CD4-positive, alpha-beta T cell (primary cell): ENCODE measurements at regions of chr5 and their contacts with region 1.

Region 1: GRCh38 chr5:39547553-39548154 is 122.9 kb upstream of the DAB2 start:
- DNase-seq: peak in 4 of 14 experiments; percentile 21 to 65 (median 58)
- ATAC-seq: no peak
- H3K4me3 ChIP-seq: no peak overlapping the region
- H3K4me3 Mint-ChIP-seq: no peak overlapping the region
- H3K27ac ChIP-seq: no peak overlapping the region
- H3K27ac Mint-ChIP-seq: no peak overlapping the region
- H3K4me1 ChIP-seq: no peaks in the 10 kb centered on the region
- H3K4me1 Mint-ChIP-seq: peaks cover 7% of the 10 kb centered on the region
- H3K27me3 ChIP-seq: peaks cover 0 to 6% of the 10 kb centered on the region in 2 experiments
- H3K27me3 Mint-ChIP-seq: peaks cover 8% of the 10 kb centered on the region
- CTCF ChIP-seq: peak; percentile 84

Region 2: DNA sequence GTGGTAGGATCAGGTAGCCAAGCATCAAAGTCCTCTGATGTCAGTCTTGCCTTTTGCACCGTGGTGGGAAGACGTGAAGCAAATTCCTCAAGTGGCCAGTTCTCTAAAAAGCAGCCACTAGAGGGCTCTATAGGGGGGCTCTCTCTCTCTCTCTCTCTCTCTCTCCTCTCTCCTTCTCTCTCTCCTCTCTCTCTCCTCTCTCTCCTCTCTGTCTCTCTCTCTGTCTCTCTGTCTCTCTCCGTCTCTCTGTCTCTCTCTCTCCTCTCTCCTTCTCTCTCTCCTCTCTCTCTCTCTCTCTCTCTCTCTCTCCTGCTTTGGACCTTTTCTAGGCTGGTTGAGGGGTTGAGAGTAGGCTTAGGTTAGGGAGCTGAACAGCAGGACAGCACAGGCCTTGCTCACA is 715.7 kb before region 1 on chr5:
- CTCF ChIA-PET with region 1: no interaction called
- POLR2A ChIA-PET with region 1: no interaction called
- intact Hi-C with region 1: loop called in 1 of 2 experiments (anchors 2 kb)
- DNase-seq: peak in 1 of 14 experiments; percentile 8
- ATAC-seq: no peak
- H3K4me3 ChIP-seq: no peak overlapping the region
- H3K4me3 Mint-ChIP-seq: no peak overlapping the region
- H3K27ac ChIP-seq: no peak overlapping the region
- H3K27ac Mint-ChIP-seq: no peak overlapping the region
- H3K4me1 ChIP-seq: no peaks in the 10 kb centered on the region
- H3K4me1 Mint-ChIP-seq: no peaks in the 10 kb centered on the region
- H3K27me3 ChIP-seq: peaks cover 3 to 15% of the 10 kb centered on the region in 2 experiments
- H3K27me3 Mint-ChIP-seq: peaks cover 48% of the 10 kb centered on the region
- CTCF ChIP-seq: no peak

Region 3: DNA sequence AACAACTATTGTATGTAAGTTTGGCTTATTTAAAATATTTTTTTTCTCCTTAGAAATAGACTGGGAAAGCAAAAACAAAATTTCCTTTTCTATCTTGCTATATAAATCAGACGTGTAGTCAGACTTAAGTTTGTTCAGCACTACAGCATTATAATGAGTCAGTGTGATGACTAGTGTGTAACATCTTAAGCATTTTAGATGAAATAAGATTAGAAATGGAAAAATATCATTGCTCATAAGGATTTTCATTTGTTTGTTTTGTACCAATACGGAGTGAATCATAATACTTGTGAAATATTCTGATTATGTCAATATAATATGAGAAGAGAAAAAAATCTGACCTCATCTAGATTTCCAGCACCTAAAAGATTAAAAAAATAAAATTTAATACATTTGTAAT is 408.8 kb before region 1 on chr5:
- CTCF ChIA-PET with region 1: no interaction called
- POLR2A ChIA-PET with region 1: no interaction called
- intact Hi-C with region 1: loop called in 1 of 2 experiments (anchors 5 kb)
- DNase-seq: no peak
- ATAC-seq: no peak
- H3K4me3 ChIP-seq: no peak overlapping the region
- H3K4me3 Mint-ChIP-seq: no peak overlapping the region
- H3K27ac ChIP-seq: no peak overlapping the region
- H3K27ac Mint-ChIP-seq: peak overlapping the region; percentile 73
- H3K4me1 ChIP-seq: no peaks in the 10 kb centered on the region
- H3K4me1 Mint-ChIP-seq: peaks cover 36% of the 10 kb centered on the region
- H3K27me3 ChIP-seq: no peaks in the 10 kb centered on the region
- H3K27me3 Mint-ChIP-seq: no peaks in the 10 kb centered on the region
- CTCF ChIP-seq: no peak

Region 4: DNA sequence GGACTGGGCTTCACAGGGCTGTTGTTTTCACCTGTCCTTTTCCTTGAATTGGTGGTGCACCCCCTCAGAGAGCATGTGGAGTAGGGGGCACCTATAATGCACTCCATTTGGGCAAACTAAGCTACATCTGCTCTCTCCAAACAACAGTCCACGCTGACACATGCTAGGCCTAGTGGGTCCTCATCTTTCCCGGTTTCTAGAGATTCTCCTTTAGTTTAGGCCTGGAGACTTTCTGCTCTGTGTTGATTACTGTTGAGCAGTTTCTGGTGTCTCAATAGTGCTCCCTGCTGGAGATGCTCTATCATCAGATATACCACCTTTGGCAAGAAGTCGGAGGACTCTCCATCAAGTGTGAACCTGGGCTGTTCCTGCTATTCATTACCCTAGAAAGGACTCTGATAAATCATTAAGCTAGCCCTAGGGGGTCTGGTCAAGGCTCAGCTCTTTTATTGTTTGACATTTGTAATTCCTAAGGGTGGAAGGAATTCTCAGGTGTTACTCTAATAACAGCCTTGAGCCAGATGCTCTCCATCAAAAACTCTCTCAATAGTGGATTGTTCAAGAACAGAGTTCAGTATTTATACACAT is 264.3 kb before region 1 on chr5:
- CTCF ChIA-PET with region 1: no interaction called
- POLR2A ChIA-PET with region 1: no interaction called
- intact Hi-C with region 1: loop called in 1 of 2 experiments (anchors 5 kb)
- DNase-seq: peak; percentile 5 to 90 (median 50)
- ATAC-seq: peak; percentile 100
- H3K4me3 ChIP-seq: no peak overlapping the region
- H3K4me3 Mint-ChIP-seq: peak overlapping the region; percentile 17
- H3K27ac ChIP-seq: no peak overlapping the region
- H3K27ac Mint-ChIP-seq: peak overlapping the region; percentile 67
- H3K4me1 ChIP-seq: peaks cover 9% of the 10 kb centered on the region
- H3K4me1 Mint-ChIP-seq: peaks cover 41% of the 10 kb centered on the region
- H3K27me3 ChIP-seq: no peaks in the 10 kb centered on the region
- H3K27me3 Mint-ChIP-seq: peaks cover 9% of the 10 kb centered on the region
- CTCF ChIP-seq: peak; percentile 81

Region 5: DNA sequence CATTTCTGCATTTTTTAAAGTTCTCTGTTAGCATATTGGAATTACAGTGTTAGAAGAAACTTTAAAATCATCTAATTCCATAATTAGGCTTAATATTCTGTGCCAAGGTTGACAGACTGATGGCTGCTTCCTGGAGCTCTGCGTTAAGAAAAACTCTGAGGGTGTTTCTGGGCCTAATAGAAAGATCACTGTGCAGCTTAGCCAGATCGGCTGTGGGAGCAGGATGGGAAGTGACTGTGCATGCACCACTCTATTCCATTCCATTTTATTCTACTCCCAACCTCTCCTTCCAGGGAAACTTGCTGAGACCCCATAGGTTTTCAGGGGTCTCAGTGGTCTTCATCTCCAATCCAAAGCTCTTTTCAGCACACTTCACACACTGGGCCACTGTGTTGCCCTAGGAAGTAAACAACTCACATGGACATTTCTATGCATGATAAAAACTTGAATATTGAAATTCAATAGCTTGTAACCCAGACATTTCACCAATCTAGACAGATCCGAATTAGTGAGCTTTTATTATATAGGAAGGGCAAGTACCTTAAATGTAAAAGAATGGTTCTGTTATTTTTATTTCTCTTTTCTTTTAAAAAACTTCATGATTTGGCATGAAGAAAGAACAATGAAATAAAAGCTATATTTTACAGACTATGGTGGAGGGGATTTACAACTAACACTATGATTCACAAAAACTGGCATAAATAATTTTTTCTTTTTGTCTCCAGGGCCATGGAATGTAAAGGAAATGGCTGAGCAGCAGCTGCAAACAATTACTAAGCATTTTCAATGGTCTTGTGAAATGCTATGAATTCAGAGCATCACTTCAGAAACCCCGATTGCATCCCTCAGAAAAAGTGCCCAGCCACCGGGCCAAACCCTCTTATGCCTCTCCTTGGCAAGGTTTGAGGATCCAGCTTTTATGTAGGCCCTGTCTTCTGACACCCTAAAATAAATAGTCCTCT is 71.5 kb before region 1 on chr5:
- CTCF ChIA-PET with region 1: no interaction called
- POLR2A ChIA-PET with region 1: no interaction called
- intact Hi-C with region 1: no loop called
- DNase-seq: no peak
- ATAC-seq: no peak
- H3K4me3 ChIP-seq: no peak overlapping the region
- H3K4me3 Mint-ChIP-seq: no peak overlapping the region
- H3K27ac ChIP-seq: no peak overlapping the region
- H3K27ac Mint-ChIP-seq: no peak overlapping the region
- H3K4me1 ChIP-seq: no peaks in the 10 kb centered on the region
- H3K4me1 Mint-ChIP-seq: no peaks in the 10 kb centered on the region
- H3K27me3 ChIP-seq: peaks cover 0 to 5% of the 10 kb centered on the region in 2 experiments
- H3K27me3 Mint-ChIP-seq: no peaks in the 10 kb centered on the region
- CTCF ChIP-seq: no peak